Activated T-helper 2 cell treated with anti-CD3 and anti-CD28 coated beads, Interferon-gamma antibody, Interleukin-2, Interleukin-4, amounts not matched to agents 10 μg/mL and 5 μg/mL and 100 μg/mL, durations not matched to agents 14 hours and 24 hours and 36 hours (primary cell): ENCODE measurements at regions of chr4 and their contacts with region 1.

Region 1: DNA sequence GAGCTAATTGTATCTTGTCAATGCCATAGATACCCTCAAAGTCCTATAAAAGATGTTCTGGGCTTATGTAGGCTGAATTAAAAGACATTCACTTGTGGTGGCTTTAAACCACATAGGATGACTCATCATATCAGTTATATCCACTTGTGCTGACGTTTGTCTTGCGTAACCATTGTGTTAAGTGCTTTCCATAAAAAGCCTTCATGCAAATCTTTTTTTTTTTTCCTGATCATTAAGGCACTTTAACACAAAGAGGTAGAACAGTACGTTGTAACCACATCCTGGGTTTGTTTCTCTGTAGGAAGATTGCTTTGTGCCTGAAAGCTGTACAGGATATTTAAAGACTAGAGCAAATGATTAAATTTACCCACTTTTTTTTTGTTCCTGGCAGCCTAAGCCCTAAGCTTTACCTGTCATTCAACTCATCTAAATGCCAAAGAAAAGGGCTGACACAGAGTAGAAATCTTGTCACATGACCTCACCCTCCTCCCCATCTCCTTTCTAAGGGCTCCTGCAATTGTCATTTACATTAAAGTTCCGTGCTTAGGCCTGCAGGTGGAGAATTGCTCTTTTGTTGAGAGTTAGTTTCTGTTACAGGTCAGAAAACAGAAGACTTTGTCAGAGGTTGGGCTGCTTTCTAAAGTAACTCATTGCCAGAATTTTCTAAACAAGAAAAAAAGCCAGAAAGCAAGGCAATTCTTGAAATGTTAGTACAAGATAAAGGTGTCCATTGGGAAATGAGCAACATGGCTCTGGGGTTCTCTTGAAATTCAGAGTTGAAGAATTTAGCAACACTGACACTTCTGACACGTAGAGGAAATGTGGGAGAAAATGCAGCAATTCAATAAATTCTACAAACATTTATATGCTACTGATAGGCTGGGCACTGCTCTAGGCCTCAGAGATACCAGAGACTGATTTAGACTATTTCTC is 555.6 kb downstream of the PPARGC1A start:
- DNase-seq: peak; percentile 56
- H3K4me3 Mint-ChIP-seq: peak overlapping the region; percentile 47
- H3K27ac Mint-ChIP-seq: peak overlapping the region; percentile 76
- H3K4me1 Mint-ChIP-seq: peaks cover 30% of the 10 kb centered on the region
- H3K27me3 Mint-ChIP-seq: peaks cover 5% of the 10 kb centered on the region

Region 2: DNA sequence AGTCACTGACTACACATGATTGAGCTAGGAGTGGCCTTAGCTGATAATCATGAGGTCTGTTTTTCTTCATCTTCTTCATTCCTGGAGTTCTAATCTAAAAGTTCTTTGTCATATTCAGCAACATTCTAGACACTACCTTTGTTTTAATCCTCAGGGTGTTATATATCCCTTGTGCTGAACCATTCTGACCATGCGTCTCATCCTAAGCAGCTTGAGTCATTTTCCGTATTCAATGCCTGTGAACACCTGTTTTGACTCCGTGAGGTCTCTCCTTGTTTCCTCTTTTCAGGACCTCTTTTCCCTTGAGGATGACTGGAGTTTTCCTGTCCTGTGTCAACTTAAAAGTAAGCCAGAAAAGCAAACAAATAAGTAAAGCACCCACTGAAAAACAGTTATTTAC is 43.6 kb before region 1 on chr4:
- intact Hi-C with region 1: loop called (anchors 5 kb)
- DNase-seq: no peak
- H3K4me3 Mint-ChIP-seq: no peak overlapping the region
- H3K27ac Mint-ChIP-seq: no peak overlapping the region
- H3K4me1 Mint-ChIP-seq: peaks cover 6% of the 10 kb centered on the region
- H3K27me3 Mint-ChIP-seq: peaks cover 14% of the 10 kb centered on the region

Region 3: DNA sequence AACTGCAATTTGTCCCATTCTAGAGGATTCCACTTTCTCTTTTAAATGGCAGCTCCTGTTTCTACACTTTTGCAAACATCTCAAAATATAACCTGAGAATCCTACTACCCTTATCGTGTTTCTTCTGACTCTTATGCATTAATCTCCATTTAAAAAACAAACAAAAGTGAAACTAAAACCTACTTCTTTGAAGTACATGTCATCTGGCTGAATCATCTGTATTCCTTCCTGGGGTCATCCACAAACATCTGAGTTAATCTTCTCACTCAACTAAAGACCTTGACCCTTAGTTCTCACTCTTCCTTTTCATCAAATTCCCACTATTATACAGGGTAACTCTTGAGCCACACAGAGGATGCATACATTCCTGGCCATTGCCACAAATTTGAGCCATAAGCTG is 29.2 kb before region 1 on chr4:
- intact Hi-C with region 1: loop called (anchors 1 kb)
- DNase-seq: no peak
- H3K4me3 Mint-ChIP-seq: no peak overlapping the region
- H3K27ac Mint-ChIP-seq: no peak overlapping the region
- H3K4me1 Mint-ChIP-seq: peaks cover 8% of the 10 kb centered on the region
- H3K27me3 Mint-ChIP-seq: no peaks in the 10 kb centered on the region

Region 4: DNA sequence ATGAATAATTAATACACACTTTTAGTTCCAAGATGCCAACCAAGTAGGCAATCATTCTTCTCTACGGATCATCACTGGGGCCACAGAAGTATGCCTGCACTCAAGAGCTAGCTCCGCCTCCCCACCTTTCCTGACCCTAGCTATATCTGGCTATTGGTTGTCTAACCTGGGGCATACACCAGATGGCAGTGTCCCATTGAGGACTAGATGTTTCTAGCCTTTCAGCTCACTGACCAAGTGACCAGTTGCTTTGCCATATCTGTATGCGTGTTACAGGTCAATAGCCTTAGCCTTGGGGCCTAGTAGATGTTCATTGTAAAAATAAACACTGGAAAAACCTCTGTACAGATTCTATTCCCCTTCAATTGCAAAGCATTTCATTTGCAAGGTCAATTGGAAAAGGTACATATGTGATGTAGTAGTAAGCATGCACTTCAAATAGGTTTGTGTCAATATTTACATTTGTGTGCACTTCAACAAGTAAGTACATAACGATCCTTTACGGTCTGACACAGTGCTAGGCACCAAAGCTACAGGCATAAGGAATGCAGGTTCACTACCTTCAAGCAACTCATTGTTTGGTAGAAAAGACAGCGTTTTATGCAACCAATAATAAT is 34.0 kb after region 1 on chr4:
- intact Hi-C with region 1: no loop called
- DNase-seq: no peak
- H3K4me3 Mint-ChIP-seq: no peak overlapping the region
- H3K27ac Mint-ChIP-seq: no peak overlapping the region
- H3K4me1 Mint-ChIP-seq: no peaks in the 10 kb centered on the region
- H3K27me3 Mint-ChIP-seq: no peaks in the 10 kb centered on the region